ENCODE measurements at regions of chr10 and their contacts with region 1.

Region 1: DNA sequence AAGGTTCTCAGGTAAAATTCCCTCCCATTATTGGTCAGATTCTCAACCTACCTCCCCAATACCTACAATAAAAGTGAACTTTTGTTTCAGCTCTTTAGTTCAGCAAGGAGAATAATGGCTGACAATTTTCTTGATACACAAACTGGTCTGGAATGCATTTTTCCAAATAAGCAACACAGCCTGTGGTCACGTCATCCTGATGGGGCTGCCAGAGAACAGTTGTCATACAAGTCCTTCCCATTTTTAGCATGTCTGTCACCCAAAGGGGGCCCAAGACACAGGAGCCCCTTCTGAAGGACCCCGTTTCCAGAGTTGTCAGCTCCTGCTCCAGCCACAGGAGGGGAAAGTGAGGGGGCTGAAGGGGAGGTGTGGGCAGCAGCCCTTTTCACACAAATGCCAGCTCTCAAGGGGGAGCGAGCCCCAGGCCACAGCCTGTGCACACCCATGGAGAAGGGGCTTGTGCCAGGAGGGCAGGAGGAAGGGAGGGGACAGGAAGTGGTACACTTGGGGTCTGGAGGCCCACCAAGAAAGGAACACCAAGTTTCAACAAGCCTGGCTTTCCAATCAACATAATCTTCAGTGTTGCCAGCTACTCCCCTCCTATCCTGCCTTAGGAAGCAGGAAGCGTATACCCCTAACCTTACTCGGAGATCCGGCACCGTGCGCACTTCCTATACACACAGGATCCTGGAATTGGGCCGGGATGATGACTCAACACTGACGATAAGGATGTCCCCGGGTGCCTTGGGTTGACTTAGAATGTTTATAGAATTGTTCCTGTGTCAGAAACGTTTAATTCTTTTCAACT is 43.4 kb upstream of the PDLIM1 start:
- DNase-seq: peak; percentile 39
- H3K4me3 ChIP-seq: no peak overlapping the region
- H3K27ac ChIP-seq: peak overlapping the region; percentile 52
- H3K4me1 ChIP-seq: peaks cover 21% of the 10 kb centered on the region
- H3K27me3 ChIP-seq: no peaks in the 10 kb centered on the region
- CTCF ChIP-seq: no peak

Region 2: DNA sequence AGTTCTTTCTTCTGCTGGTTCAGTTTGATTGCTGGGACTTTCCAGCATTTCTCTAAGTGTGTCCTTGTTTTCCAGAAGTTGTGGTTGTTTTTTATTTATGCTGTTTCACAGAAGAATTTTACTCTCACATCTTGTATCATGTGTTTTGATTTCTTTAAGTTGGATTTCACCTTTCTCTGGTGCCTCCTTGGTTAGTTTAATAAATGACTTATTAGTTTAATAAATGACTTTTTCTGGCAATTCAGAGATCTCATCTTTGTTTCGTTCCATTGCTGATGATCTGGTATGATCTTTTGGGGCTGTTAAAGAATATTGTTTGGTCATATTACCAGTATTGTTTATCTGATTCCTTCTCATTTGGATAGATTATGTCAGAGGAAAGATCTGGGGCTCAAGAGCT is 455.6 kb before region 1 on chr10:
- CTCF ChIA-PET with region 1: no interaction called
- dilution Hi-C with region 1: no loop called
- in situ Hi-C with region 1: no loop called
- intact Hi-C with region 1: no loop called
- DNase-seq: no peak
- H3K4me3 ChIP-seq: no peak overlapping the region
- H3K27ac ChIP-seq: no peak overlapping the region
- H3K4me1 ChIP-seq: no peaks in the 10 kb centered on the region
- H3K27me3 ChIP-seq: no peaks in the 10 kb centered on the region
- CTCF ChIP-seq: no peak

Region 3: DNA sequence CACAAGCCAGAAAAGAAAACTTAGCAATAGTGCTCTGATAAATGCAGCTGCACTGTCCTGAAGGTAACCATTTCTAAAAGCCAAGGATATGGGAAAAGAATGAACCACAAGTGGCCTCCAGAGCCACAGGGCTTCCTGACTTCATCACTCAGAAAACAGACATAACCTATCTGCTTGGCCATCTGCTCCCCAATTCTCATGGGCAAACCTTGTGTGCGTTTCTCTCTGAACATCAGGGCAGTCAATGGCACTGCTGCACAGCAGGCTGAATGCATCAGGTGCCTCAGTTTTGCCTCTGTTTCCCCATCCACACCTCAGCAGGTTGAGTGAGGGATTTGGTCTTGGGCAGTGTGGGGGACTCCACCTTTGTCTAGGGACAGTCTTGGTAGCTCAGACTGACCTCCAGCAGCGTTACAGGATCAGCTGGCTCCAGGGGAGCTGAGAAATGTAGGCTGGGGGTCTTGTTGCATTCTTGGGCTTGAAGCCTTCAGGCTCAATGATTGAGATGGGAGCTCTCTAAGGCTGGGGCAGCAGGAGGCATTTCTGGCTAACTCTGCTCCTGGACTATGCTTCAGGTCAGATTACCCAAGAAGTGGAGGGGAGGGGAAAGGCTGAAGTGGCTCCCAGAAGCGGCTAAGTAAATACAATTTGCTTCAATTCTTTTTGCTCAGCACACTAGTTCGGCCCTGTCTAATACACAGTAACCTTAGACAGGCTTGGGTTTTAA is 19.8 kb before region 1 on chr10:
- CTCF ChIA-PET with region 1: no interaction called
- dilution Hi-C with region 1: no loop called
- in situ Hi-C with region 1: no loop called
- intact Hi-C with region 1: loop called (anchors 2 kb)
- DNase-seq: no peak
- H3K4me3 ChIP-seq: no peak overlapping the region
- H3K27ac ChIP-seq: no peak overlapping the region
- H3K4me1 ChIP-seq: no peaks in the 10 kb centered on the region
- H3K27me3 ChIP-seq: no peaks in the 10 kb centered on the region
- CTCF ChIP-seq: no peak

Region 4: DNA sequence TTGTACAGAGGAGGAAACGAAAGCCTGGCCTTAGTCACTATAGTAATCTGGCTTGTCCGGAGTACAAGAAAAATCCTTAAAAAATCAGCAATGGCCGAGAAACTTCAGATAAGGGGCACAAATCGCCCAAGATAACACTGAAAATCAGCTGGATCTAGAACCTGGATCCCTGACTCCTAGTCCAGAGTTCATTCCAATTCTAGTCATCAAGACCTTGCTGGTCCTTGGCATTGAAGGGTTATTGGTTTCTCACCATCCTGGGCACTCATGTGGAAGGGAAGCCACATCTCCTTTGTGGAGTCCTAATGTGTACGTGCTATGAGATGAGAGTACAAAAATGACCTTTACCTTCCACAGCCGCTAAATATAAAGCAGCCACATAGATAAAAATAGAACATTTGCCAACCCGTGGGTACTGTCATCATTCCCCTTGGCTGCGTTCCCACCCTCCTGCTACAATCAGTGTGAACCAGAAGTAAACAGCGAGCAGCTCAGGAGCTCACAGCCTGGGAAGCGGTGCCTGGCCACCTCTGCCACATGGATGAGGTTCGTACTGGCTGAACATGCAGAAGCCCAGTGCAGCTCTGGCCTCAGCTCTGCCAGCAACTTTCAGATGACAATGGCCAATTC is 72.6 kb after region 1 on chr10:
- CTCF ChIA-PET with region 1: no interaction called
- dilution Hi-C with region 1: no loop called
- in situ Hi-C with region 1: no loop called
- intact Hi-C with region 1: no loop called
- DNase-seq: peak; percentile 35
- H3K4me3 ChIP-seq: no peak overlapping the region
- H3K27ac ChIP-seq: no peak overlapping the region
- H3K4me1 ChIP-seq: peaks cover 7% of the 10 kb centered on the region
- H3K27me3 ChIP-seq: no peaks in the 10 kb centered on the region
- CTCF ChIP-seq: no peak